Caco-2 (cell line): ENCODE measurements at regions of chr7 and their contacts with region 1.

Region 1: GRCh38 chr7:26200444-26201246 is at the start of gene HNRNPA2B1:
- DNase-seq: peak; percentile 96
- H3K4me3 ChIP-seq: peak within 1 kb of the TSS; percentile 99
- H3K4me3 Mint-ChIP-seq: peak within 1 kb of the TSS; percentile 99
- H3K27ac Mint-ChIP-seq: peak within 1 kb of the TSS; percentile 100
- H3K4me1 ChIP-seq: peaks cover 21% of the 10 kb centered on the region
- H3K4me1 Mint-ChIP-seq: peaks cover 26% of the 10 kb centered on the region
- H3K27me3 ChIP-seq: no peaks in the 10 kb centered on the region
- H3K27me3 Mint-ChIP-seq: no peaks in the 10 kb centered on the region
- CTCF ChIP-seq: no peak
- total RNA-seq, gene HNRNPA2B1: 799 and 839 TPM in 2 replicates

Region 2: DNA sequence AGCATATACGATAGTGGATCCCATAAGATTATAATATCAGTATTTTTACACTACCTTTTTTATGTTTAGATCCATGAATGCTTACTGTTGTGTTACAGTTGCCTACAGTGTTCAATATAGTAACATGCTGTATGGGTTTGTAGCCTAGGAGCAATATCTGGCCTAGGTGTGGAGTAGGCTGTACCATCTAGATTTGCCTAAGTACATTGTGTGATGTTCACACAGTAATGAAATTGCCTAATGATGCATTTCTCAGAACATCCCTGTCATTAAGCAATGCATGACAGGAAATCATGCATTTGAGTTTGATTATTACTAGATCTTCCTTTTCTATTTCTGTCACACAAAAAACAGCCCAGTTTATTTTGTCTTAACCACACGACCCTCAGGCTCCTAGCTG is 15.4 kb after region 1 on chr7:
- CTCF ChIA-PET with region 1: no interaction called
- POLR2A ChIA-PET with region 1: interaction called, 10 read pairs
- intact Hi-C with region 1: no loop called
- DNase-seq: no peak
- H3K4me3 ChIP-seq: no peak overlapping the region
- H3K4me3 Mint-ChIP-seq: no peak overlapping the region
- H3K27ac Mint-ChIP-seq: no peak overlapping the region
- H3K4me1 ChIP-seq: no peaks in the 10 kb centered on the region
- H3K4me1 Mint-ChIP-seq: peaks cover 6% of the 10 kb centered on the region
- H3K27me3 ChIP-seq: no peaks in the 10 kb centered on the region
- H3K27me3 Mint-ChIP-seq: no peaks in the 10 kb centered on the region
- CTCF ChIP-seq: no peak

Region 3: GRCh38 chr7:26284995-26285632 is 84.5 kb after region 1 on chr7:
- CTCF ChIA-PET with region 1: interaction called, 3 read pairs
- POLR2A ChIA-PET with region 1: no interaction called
- intact Hi-C with region 1: loop called (anchors 2 kb)
- DNase-seq: peak in 1 of 2 experiments; percentile 55
- H3K4me3 ChIP-seq: no peak overlapping the region
- H3K4me3 Mint-ChIP-seq: no peak overlapping the region
- H3K27ac Mint-ChIP-seq: no peak overlapping the region
- H3K4me1 ChIP-seq: no peaks in the 10 kb centered on the region
- H3K4me1 Mint-ChIP-seq: no peaks in the 10 kb centered on the region
- H3K27me3 ChIP-seq: no peaks in the 10 kb centered on the region
- H3K27me3 Mint-ChIP-seq: no peaks in the 10 kb centered on the region
- CTCF ChIP-seq: peak; percentile 35 to 43

Region 4: GRCh38 chr7:26321435-26321834 is 120.8 kb after region 1 on chr7:
- CTCF ChIA-PET with region 1: no interaction called
- POLR2A ChIA-PET with region 1: no interaction called
- intact Hi-C with region 1: no loop called
- DNase-seq: no peak
- H3K4me3 ChIP-seq: no peak overlapping the region
- H3K4me3 Mint-ChIP-seq: no peak overlapping the region
- H3K27ac Mint-ChIP-seq: no peak overlapping the region
- H3K4me1 ChIP-seq: no peaks in the 10 kb centered on the region
- H3K4me1 Mint-ChIP-seq: no peaks in the 10 kb centered on the region
- H3K27me3 ChIP-seq: no peaks in the 10 kb centered on the region
- H3K27me3 Mint-ChIP-seq: no peaks in the 10 kb centered on the region
- CTCF ChIP-seq: no peak

Region 5: DNA sequence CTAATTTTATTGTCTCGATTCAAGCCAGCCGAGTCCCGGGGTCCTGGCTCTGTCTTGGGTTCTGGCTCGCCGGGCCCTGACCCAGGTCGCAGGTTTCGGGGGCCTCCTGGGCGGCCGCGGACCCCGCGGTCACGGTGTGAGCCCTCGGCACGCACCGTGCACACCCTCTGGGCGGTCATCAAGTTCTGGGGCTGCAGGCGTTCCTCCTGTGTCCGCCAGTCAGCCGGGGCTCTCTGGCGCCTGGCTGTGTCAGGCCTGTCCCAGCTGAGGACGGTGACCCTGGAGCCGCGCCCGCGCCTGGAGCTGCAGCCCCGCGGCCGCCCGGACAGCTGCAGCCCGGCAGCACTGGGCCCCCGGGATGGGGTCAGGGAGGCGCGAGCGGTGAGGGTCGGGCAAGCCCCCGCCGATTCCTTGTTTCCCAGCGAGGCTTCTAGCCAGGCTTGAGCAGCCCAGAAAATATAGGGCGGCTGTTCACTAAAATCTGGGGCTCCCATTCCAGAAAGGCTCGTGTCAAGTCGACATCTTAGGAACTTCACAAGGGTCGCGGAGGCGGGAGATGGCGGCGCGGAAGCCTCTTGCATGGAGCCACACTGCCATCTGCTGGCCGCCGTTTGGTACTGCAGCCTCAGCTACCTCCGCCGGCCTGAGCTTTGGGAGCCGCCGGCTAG is 960.0 kb after region 1 on chr7:
- CTCF ChIA-PET with region 1: no interaction called
- POLR2A ChIA-PET with region 1: no interaction called
- intact Hi-C with region 1: loop called (anchors 10 kb)
- DNase-seq: peak; percentile 84 to 93
- H3K4me3 ChIP-seq: peak overlapping the region; percentile 73
- H3K4me3 Mint-ChIP-seq: peak overlapping the region; percentile 77
- H3K27ac Mint-ChIP-seq: no peak overlapping the region
- H3K4me1 ChIP-seq: peaks cover 7% of the 10 kb centered on the region
- H3K4me1 Mint-ChIP-seq: peaks cover 14% of the 10 kb centered on the region
- H3K27me3 ChIP-seq: no peaks in the 10 kb centered on the region
- H3K27me3 Mint-ChIP-seq: no peaks in the 10 kb centered on the region
- CTCF ChIP-seq: peak; percentile 94 to 98